Activated naive CD4-positive, alpha-beta T cell treated with anti-CD3 and anti-CD28 coated beads for 36 hours (primary cell): ENCODE measurements at regions of chr9 and their contacts with region 1.

Region 1: GRCh38 chr9:128159784-128160602 is at the start of gene BBLN:
- DNase-seq: peak; percentile 96
- H3K4me3 Mint-ChIP-seq: peak within 1 kb of the TSS; percentile 77
- H3K27ac Mint-ChIP-seq: peak within 1 kb of the TSS; percentile 85
- H3K4me1 Mint-ChIP-seq: peaks cover 16% of the 10 kb centered on the region
- H3K27me3 Mint-ChIP-seq: no peaks in the 10 kb centered on the region
- total RNA-seq, gene BBLN: 73.3 to 77.7 TPM

Region 2: DNA sequence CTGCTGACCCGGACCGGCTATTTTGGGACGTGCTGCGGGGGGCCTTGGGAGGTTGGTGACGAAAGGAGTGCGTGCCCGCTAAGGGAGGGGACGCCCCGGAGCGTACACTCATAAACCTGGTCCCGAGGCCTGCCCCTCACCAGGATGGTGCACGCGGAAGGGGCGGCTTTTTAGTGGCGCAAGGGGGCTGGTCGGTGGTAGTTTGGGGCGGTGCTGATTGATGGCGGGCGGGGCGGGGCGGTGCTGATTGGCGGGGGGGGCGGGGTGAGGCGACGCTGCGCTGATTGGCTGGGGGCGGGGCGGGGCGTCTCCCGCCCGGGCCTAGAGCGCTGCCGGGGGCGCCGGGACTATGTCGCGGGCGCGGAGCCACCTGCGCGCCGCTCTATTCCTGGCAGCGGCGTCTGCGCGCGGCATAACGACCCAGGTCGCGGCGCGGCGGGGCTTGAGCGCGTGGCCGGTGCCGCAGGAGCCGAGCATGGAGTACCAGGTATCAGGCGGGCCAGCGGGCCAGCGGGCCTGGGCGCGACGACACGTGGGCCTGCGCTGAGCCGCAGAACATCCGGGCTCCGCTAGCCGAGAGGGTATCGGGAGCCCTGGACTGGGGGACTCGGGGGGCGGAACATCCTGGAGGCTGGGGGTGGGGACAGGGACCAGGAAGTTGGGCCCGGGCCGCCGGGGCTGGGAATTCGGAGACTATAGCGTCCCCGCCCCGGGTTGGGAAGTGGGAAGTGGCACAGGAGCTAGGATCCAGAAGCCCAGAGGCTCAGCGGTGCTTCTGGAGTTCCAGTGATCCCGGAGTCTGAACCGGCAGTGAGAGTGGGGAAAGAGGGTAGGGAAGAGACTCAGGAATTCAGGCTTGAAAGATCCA is 357.2 kb before region 1 on chr9 and contains the start of gene FPGS:
- CTCF ChIA-PET with region 1: no interaction called
- intact Hi-C with region 1: loop called (anchors 1 kb)
- DNase-seq: peak; percentile 92
- H3K4me3 Mint-ChIP-seq: peak within 1 kb of the TSS; percentile 96
- H3K27ac Mint-ChIP-seq: peak within 1 kb of the TSS; percentile 84
- H3K4me1 Mint-ChIP-seq: peaks cover 29% of the 10 kb centered on the region
- H3K27me3 Mint-ChIP-seq: no peaks in the 10 kb centered on the region
- total RNA-seq, gene FPGS: 67.8 to 73.0 TPM

Region 3: DNA sequence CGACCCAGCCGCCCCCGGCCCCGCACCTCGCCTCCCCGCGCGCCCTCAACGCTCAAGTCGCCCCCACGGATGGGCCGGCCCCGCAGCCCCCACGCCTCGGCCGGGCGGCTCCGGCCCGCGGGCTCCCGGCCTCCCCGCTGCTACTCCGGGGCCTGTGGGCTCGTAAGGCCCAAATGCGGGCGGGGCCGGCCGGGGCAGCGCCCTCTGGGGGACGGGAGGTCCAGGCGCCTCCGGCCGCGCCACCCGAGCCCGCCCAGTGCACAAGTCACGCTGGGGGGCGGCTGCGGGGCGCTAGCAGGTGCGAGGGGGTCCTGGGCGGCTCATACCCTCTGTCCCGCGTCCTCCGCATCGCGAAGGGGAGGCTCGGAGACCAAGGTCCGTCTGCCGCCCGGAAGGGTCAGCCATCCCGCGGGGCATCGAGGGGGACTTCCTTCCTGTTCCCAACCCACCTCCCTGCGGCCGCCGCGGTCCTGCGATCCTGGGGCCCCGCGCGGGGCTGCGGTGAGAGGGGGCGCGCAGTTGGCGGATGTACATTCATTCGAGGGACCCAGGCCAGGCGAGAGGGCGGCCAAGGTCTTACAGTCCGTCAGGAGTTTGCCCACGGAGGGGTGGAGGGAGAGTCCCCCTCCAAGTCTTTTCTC is 31.5 kb after region 1 on chr9 and contains the start of gene CIZ1:
- CTCF ChIA-PET with region 1: no interaction called
- intact Hi-C with region 1: loop called (anchors 1 kb)
- DNase-seq: peak; percentile 71
- H3K4me3 Mint-ChIP-seq: peak within 1 kb of the TSS; percentile 96
- H3K27ac Mint-ChIP-seq: peak within 1 kb of the TSS; percentile 83
- H3K4me1 Mint-ChIP-seq: peaks cover 21% of the 10 kb centered on the region
- H3K27me3 Mint-ChIP-seq: no peaks in the 10 kb centered on the region
- total RNA-seq, gene CIZ1: 79.5 to 82.8 TPM

Region 4: GRCh38 chr9:128218518-128219389 is 58.8 kb after region 1 on chr9:
- CTCF ChIA-PET with region 1: no interaction called
- intact Hi-C with region 1: loop called (anchors 1 kb)
- DNase-seq: peak; percentile 99
- H3K4me3 Mint-ChIP-seq: peak overlapping the region; percentile 77
- H3K27ac Mint-ChIP-seq: no peak overlapping the region
- H3K4me1 Mint-ChIP-seq: peaks cover 13% of the 10 kb centered on the region
- H3K27me3 Mint-ChIP-seq: no peaks in the 10 kb centered on the region

Region 5: GRCh38 chr9:128249908-128250838 is 90.2 kb after region 1 on chr9:
- CTCF ChIA-PET with region 1: no interaction called
- intact Hi-C with region 1: loop called (anchors 1 kb)
- DNase-seq: peak; percentile 98
- H3K4me3 Mint-ChIP-seq: peak overlapping the region; percentile 77
- H3K27ac Mint-ChIP-seq: no peak overlapping the region
- H3K4me1 Mint-ChIP-seq: peaks cover 14% of the 10 kb centered on the region
- H3K27me3 Mint-ChIP-seq: peaks cover 10% of the 10 kb centered on the region

Region 6: GRCh38 chr9:128322404-128323211 is 162.6 kb after region 1 on chr9 and contains the starts of genes COQ4 and TRUB2:
- CTCF ChIA-PET with region 1: no interaction called
- intact Hi-C with region 1: loop called (anchors 5 kb)
- DNase-seq: peak; percentile 95
- H3K4me3 Mint-ChIP-seq: peak within 1 kb of the TSS; percentile 90
- H3K27ac Mint-ChIP-seq: peak within 1 kb of the TSS; percentile 94
- H3K4me1 Mint-ChIP-seq: peaks cover 22% of the 10 kb centered on the region
- H3K27me3 Mint-ChIP-seq: no peaks in the 10 kb centered on the region
- total RNA-seq, gene COQ4: 27.8 to 29.6 TPM
- total RNA-seq, gene TRUB2: 28.0 to 29.4 TPM